T-cell (primary cell): ENCODE measurements at regions of chr16 and their contacts with region 1.

Region 1: DNA sequence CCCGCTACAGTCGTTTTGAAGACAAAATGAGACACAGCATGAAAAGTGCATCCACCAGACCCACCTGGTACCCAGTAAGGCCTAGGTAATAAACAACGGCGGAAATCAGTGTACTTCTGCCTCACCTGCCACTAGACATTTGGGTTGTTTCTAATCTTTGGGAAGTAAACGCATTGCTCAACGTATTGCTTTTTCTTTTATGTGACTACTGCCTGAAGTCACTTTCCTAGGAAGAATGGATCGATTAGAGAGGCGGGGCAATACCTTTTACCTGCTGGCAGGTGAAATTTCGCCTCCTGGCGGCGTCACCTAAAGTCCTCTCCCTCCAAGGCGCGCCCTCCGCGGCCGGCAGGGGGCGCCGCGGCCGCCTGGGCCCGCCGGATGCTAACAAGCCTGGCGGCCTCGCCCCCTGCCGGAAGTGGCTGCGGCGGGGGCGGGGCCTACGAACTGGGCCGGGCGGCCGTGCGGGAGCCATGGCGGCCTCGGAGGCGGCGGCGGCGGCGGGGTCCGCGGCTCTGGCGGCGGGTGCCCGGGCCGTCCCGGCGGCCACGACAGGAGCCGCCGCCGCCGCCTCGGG is at the start of gene ATMIN:
- DNase-seq: peak; percentile 76 to 95 (median 86)
- ATAC-seq: peak; percentile 94 to 97 (median 96)
- H3K4me3 ChIP-seq: peak within 1 kb of the TSS; percentile 44 to 56
- H3K4me3 Mint-ChIP-seq: peak within 1 kb of the TSS; percentile 82 to 83 (median 83)
- H3K27ac ChIP-seq: no peak within 1 kb of the TSS
- H3K27ac Mint-ChIP-seq: peak within 1 kb of the TSS; percentile 8 to 69
- H3K4me1 ChIP-seq: peaks cover 5 to 31% of the 10 kb centered on the region in 2 experiments
- H3K4me1 Mint-ChIP-seq: peaks cover 24 to 42% (median 32%) of the 10 kb centered on the region in 3 donors
- H3K27me3 ChIP-seq: no peaks in the 10 kb centered on the region
- H3K27me3 Mint-ChIP-seq: no peaks in the 10 kb centered on the region
- total RNA-seq, gene ATMIN: 30.2 to 36.2 (median 31.8) TPM

Region 2: GRCh38 chr16:80948886-80949493 is 86.5 kb before region 1 on chr16:
- CTCF ChIA-PET with region 1: no interaction called
- POLR2A ChIA-PET with region 1: no interaction called
- DNase-seq: peak in 7 of 35 experiments; percentile 3 to 35 (median 10)
- ATAC-seq: no peak
- H3K4me3 ChIP-seq: no peak overlapping the region
- H3K4me3 Mint-ChIP-seq: no peak overlapping the region
- H3K27ac ChIP-seq: no peak overlapping the region
- H3K27ac Mint-ChIP-seq: no peak overlapping the region
- H3K4me1 ChIP-seq: no peaks in the 10 kb centered on the region
- H3K4me1 Mint-ChIP-seq: no peaks in the 10 kb centered on the region
- H3K27me3 ChIP-seq: peaks cover 0 to 6% of the 10 kb centered on the region in 2 experiments
- H3K27me3 Mint-ChIP-seq: peaks cover 19 to 28% of the 10 kb centered on the region in 2 donors

Region 3: DNA sequence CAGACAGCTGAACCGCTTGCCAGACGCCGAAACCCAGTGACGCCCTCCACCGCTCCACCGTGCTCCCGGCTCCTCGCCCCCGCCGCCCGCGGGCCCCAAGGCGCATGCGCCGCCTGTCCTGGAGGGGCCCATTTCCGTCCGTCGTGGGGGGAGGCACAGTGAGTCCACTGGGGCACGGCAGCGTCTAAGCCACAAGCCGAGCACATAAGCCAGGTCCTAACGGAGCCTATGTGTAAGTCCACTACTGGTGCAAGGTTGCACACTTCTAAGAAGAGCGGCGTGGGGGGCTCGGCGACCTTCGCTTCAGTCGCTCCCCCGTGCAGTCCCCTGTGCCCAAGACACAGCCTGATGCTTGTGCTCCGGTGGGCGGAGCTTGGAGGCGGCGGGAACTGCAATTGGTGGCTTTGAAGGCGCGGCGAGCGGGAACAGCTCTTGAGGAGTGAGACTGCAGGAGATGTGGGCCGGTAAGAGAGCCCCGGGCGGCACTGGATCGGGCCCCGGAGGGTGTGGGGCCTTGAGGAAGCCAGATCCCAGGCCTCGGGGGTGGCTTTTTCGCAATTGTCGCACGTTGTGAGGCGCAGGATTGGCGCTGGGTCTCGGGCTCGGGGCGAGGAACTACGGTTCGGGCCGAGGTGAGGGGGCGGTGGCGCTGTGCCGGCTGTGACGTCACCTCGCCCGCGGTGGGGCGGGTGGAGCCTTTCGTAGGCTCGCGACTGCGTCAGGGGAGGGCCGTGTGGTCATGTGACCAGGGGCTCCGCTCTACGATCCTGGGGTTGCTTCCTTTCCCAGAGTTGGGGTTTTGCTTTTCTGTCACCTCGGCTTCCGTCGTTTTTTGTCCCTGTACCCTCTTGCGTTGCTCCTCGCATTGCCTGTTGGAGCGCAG is 28.4 kb before region 1 on chr16 and contains the starts of genes CENPN and CMC2:
- CTCF ChIA-PET with region 1: interaction called, 6 to 29 read pairs
- POLR2A ChIA-PET with region 1: interaction called in 1 of 2 experiments, 6 read pairs
- DNase-seq: peak; percentile 96 to 99 (median 98)
- ATAC-seq: peak; percentile 82 to 86 (median 85)
- H3K4me3 ChIP-seq: peak within 1 kb of the TSS; percentile 83 to 91
- H3K4me3 Mint-ChIP-seq: peak within 1 kb of the TSS; percentile 88 to 97 (median 93)
- H3K27ac ChIP-seq: peak within 1 kb of the TSS; percentile 96
- H3K27ac Mint-ChIP-seq: peak within 1 kb of the TSS; percentile 100
- H3K4me1 ChIP-seq: peaks cover 11 to 29% of the 10 kb centered on the region in 2 experiments
- H3K4me1 Mint-ChIP-seq: peaks cover 43 to 47% (median 44%) of the 10 kb centered on the region in 3 donors
- H3K27me3 ChIP-seq: no peaks in the 10 kb centered on the region
- H3K27me3 Mint-ChIP-seq: no peaks in the 10 kb centered on the region
- total RNA-seq, gene CENPN: 1.3 to 9.0 (median 2.8) TPM
- total RNA-seq, gene CMC2: 29.9 to 56.1 (median 38.1) TPM

Region 4: GRCh38 chr16:81077076-81077940 is 41.8 kb after region 1 on chr16 and contains the start of gene C16orf46:
- CTCF ChIA-PET with region 1: interaction called, 7 to 35 read pairs
- POLR2A ChIA-PET with region 1: interaction called, 4 to 11 read pairs
- DNase-seq: peak; percentile 89 to 99 (median 95)
- ATAC-seq: peak; percentile 83 to 87 (median 85)
- H3K4me3 ChIP-seq: peak within 1 kb of the TSS; percentile 74 to 95
- H3K4me3 Mint-ChIP-seq: peak within 1 kb of the TSS in 2 of 3 donors; percentile 31 to 39
- H3K27ac ChIP-seq: peak within 1 kb of the TSS; percentile 89
- H3K27ac Mint-ChIP-seq: peak within 1 kb of the TSS in 1 of 2 donors; percentile 11
- H3K4me1 ChIP-seq: peaks cover 5 to 11% of the 10 kb centered on the region in 2 experiments
- H3K4me1 Mint-ChIP-seq: peaks cover 3 to 8% (median 6%) of the 10 kb centered on the region in 3 donors
- H3K27me3 ChIP-seq: no peaks in the 10 kb centered on the region
- H3K27me3 Mint-ChIP-seq: peaks cover 0 to 2% of the 10 kb centered on the region in 2 donors
- total RNA-seq, gene C16orf46: 0.26 to 0.96 (median 0.36) TPM in 4 of 5 donors, not detected in the other